PC-3 (cell line): ENCODE measurements at regions of chr5 and their contacts with region 1.

Region 1: DNA sequence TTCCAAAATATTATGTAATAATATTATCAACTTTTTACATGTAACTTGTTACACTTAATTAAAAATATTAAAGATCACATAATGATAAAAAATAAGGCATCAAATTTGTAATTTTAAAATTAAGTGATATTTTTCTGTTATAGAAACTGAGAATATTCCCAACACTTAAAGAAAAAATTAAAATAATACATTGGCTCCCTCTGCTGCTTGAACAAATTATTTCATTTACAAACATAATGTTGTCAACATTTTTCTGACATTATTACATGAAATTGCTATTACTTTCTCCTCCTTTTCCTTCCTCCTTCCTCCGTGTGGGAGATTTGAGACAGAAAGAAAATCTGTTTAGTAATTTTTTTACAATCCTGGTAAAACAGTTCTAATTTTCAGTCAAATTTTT is 42.3 kb downstream of the RNF180 start:
- DNase-seq: peak; percentile 70
- ATAC-seq: no peak
- H3K4me3 ChIP-seq: no peak overlapping the region
- H3K27ac ChIP-seq: no peak overlapping the region
- H3K4me1 ChIP-seq: peaks cover 15% of the 10 kb centered on the region
- H3K27me3 ChIP-seq: no peaks in the 10 kb centered on the region
- CTCF ChIP-seq: peak; percentile 67

Region 2: GRCh38 chr5:63963080-63963735 is 244.8 kb before region 1 on chr5:
- CTCF ChIA-PET with region 1: no interaction called
- POLR2A ChIA-PET with region 1: no interaction called
- intact Hi-C with region 1: no loop called
- DNase-seq: peak; percentile 74
- ATAC-seq: peak; percentile 66
- H3K4me3 ChIP-seq: no peak overlapping the region
- H3K27ac ChIP-seq: no peak overlapping the region
- H3K4me1 ChIP-seq: no peaks in the 10 kb centered on the region
- H3K27me3 ChIP-seq: peaks cover 18% of the 10 kb centered on the region; the same call in 1 of the 2 replicates
- CTCF ChIP-seq: peak; percentile 84

Region 3: DNA sequence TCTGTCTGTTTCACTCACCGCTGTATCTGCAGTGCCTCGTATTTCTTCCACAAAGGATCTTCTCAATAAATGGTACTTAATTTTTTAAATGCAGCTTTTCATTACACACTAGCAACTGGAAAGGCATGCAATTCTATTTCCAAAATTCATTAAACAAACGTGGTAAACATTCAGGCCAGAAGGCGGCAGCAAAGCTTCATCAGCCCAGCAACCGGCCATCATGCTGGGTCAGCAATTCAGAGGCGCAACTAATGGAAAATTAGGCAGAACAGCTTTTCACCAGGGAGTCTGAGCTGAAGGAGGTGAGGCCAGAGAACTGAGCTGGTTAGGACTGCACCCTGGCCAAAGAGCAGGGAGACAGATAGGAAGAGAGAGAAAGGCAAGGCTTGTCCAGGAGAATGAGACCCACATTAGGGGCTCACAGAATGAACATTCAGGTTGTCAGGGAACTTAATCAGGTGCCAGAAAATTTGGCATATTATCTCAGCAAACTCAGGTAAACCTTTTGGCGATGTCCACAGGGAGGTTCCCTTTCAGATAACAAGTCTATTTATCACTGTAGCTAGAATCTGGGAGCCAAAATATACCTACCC is 60.0 kb before region 1 on chr5:
- CTCF ChIA-PET with region 1: interaction called, 18 read pairs
- POLR2A ChIA-PET with region 1: no interaction called
- intact Hi-C with region 1: loop called (anchors 1 kb)
- DNase-seq: peak; percentile 71
- ATAC-seq: peak; percentile 44
- H3K4me3 ChIP-seq: no peak overlapping the region
- H3K27ac ChIP-seq: no peak overlapping the region
- H3K4me1 ChIP-seq: peaks cover 18% of the 10 kb centered on the region
- H3K27me3 ChIP-seq: no peaks in the 10 kb centered on the region
- CTCF ChIP-seq: peak; percentile 93

Region 4: GRCh38 chr5:64625678-64626077 is 417.7 kb after region 1 on chr5:
- CTCF ChIA-PET with region 1: no interaction called
- POLR2A ChIA-PET with region 1: no interaction called
- intact Hi-C with region 1: no loop called
- DNase-seq: no peak
- ATAC-seq: no peak
- H3K4me3 ChIP-seq: no peak overlapping the region
- H3K27ac ChIP-seq: no peak overlapping the region
- H3K4me1 ChIP-seq: no peaks in the 10 kb centered on the region; the same call in 1 of the 2 replicates
- H3K27me3 ChIP-seq: no peaks in the 10 kb centered on the region
- CTCF ChIP-seq: no peak

Region 5: GRCh38 chr5:64727150-64727549 is 519.2 kb after region 1 on chr5:
- CTCF ChIA-PET with region 1: no interaction called
- POLR2A ChIA-PET with region 1: no interaction called
- intact Hi-C with region 1: no loop called
- DNase-seq: no peak
- ATAC-seq: no peak
- H3K4me3 ChIP-seq: no peak overlapping the region
- H3K27ac ChIP-seq: no peak overlapping the region
- H3K4me1 ChIP-seq: no peaks in the 10 kb centered on the region
- H3K27me3 ChIP-seq: no peaks in the 10 kb centered on the region
- CTCF ChIP-seq: no peak